ENCODE measurements at regions of chr11 and their contacts with region 1.

Region 1: GRCh38 chr11:33857933-33858371 is 33.9 kb downstream of the LMO2 start:
- DNase-seq: peak; percentile 80
- H3K4me3 Mint-ChIP-seq: no peak overlapping the region
- H3K27ac Mint-ChIP-seq: no peak overlapping the region
- H3K4me1 Mint-ChIP-seq: no peaks in the 10 kb centered on the region
- H3K27me3 Mint-ChIP-seq: peaks cover 33% of the 10 kb centered on the region
- CTCF ChIP-seq: peak; percentile 91

Region 2: GRCh38 chr11:33835143-33835878 is 22.6 kb before region 1 on chr11:
- CTCF ChIA-PET with region 1: interaction called, 11 read pairs
- POLR2A ChIA-PET with region 1: interaction called, 4 read pairs
- intact Hi-C with region 1: no loop called
- DNase-seq: peak; percentile 59
- H3K4me3 Mint-ChIP-seq: no peak overlapping the region
- H3K27ac Mint-ChIP-seq: no peak overlapping the region
- H3K4me1 Mint-ChIP-seq: peaks cover 12% of the 10 kb centered on the region
- H3K27me3 Mint-ChIP-seq: peaks cover 20% of the 10 kb centered on the region
- CTCF ChIP-seq: peak; percentile 45

Region 3: DNA sequence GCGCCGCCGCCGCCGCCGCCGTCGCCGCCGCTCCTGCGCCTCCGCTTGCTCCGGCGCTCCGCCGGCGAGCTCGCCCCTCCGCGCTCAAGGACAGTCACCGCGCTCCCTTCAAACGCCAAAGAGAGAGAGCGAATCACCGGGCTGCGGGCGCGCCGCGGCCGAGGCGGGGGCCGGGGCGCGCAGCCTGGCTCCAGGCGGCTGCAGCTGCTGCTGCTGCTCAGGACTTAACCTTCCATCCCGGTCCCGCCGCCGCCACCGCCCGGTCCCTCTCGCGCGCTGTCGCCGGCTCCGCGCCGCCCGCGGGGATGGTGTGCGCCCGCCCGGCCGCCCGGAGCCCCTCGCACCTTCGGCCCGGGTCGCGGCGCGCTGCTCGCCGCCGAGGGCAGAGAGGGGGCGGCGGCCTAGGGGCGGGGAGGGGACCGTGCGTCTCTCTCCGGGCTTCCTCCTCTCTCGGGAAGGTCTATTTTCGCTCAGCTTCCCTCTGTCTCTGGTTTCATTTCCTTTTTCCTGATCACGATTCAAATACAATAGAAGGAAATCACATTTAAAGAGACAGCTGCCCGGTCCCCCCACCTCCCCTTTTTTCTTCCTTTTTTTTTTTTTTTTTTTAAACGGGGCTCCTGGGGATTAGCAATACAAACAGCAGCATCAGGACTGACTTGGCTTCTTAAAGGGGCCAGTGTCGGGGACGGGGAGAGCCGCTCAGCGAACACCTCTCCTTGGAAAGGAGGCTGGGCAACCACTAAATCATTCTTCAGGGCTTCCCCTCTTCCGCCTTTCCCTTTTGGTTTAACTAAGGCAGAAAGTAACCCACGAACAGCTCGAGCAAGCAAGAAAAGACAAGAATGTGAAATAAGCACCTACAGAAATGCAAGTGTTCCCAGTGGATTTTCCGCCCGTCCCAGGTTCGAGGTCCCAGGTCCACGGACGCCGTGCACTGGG is 11.8 kb after region 1 on chr11:
- CTCF ChIA-PET with region 1: interaction called, 25 read pairs
- POLR2A ChIA-PET with region 1: interaction called, 3 read pairs
- intact Hi-C with region 1: no loop called
- DNase-seq: peak; percentile 33
- H3K4me3 Mint-ChIP-seq: peak overlapping the region; percentile 86
- H3K27ac Mint-ChIP-seq: no peak overlapping the region
- H3K4me1 Mint-ChIP-seq: no peaks in the 10 kb centered on the region
- H3K27me3 Mint-ChIP-seq: no peaks in the 10 kb centered on the region
- CTCF ChIP-seq: no peak

Region 4: GRCh38 chr11:33899383-33900037 is 41.6 kb after region 1 on chr11:
- CTCF ChIA-PET with region 1: interaction called, 10 read pairs
- POLR2A ChIA-PET with region 1: no interaction called
- intact Hi-C with region 1: no loop called
- DNase-seq: peak; percentile 83
- H3K4me3 Mint-ChIP-seq: no peak overlapping the region
- H3K27ac Mint-ChIP-seq: no peak overlapping the region
- H3K4me1 Mint-ChIP-seq: peaks cover 18% of the 10 kb centered on the region
- H3K27me3 Mint-ChIP-seq: peaks cover 15% of the 10 kb centered on the region
- CTCF ChIP-seq: no peak

Region 5: DNA sequence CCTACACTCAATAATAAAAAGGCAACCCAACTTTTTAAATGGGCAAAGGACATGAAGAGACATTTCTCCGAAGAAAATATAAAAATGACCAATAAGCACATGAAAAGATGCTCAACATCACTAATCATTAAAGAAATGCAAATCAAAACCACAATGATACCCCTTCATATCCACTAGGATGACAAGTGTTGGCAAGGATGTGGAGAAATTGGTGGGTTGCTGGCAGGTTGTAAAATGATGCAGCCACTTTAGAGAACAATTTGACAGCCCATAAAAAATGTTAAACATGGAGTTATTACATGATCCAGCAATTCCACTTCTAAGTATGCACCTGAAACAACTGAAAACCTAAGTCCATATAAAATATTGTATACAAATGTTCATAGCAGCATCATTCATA is 107.1 kb after region 1 on chr11:
- CTCF ChIA-PET with region 1: interaction called, 119 read pairs
- POLR2A ChIA-PET with region 1: no interaction called
- intact Hi-C with region 1: no loop called
- DNase-seq: no peak
- H3K4me3 Mint-ChIP-seq: no peak overlapping the region
- H3K27ac Mint-ChIP-seq: no peak overlapping the region
- H3K4me1 Mint-ChIP-seq: no peaks in the 10 kb centered on the region
- H3K27me3 Mint-ChIP-seq: no peaks in the 10 kb centered on the region
- CTCF ChIP-seq: no peak

Region 6: DNA sequence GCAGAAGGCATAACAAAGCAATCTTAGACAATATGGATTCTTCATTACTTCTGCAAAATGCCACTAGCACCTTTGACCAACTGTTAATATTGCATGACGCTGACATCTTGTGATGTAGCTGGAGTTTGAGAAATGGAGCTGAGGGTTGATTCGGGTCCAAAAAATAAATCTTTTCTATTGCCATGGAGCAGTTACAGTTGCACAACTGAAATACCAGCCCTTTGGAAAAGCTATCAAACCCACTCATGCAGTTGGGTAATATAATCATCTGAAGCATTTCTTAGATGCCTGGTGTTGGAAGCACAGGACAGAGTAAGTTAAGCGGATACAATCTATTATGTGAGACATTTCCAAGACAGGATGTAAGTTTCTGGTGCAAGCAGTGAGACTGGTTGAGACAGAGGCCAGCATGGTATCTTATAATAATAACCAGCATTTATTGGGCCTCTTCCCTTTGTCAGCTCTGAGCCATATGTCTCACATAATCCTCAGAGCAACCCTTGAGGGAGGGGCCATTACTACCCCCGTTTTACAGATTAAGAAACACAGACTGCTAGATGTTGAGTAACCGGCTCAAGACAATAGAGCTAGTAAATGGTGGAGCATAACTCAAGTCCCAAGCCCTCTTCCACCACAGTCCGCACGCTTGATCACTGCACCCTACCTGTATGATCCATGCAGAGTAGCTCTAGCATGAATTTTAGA is 118.7 kb after region 1 on chr11:
- CTCF ChIA-PET with region 1: interaction called, 119 read pairs
- POLR2A ChIA-PET with region 1: interaction called, 4 read pairs
- intact Hi-C with region 1: loop called (anchors 1 kb)
- DNase-seq: no peak
- H3K4me3 Mint-ChIP-seq: no peak overlapping the region
- H3K27ac Mint-ChIP-seq: no peak overlapping the region
- H3K4me1 Mint-ChIP-seq: no peaks in the 10 kb centered on the region
- H3K27me3 Mint-ChIP-seq: peaks cover 29% of the 10 kb centered on the region
- CTCF ChIP-seq: no peak

Region 7: GRCh38 chr11:34086554-34087283 is 228.8 kb after region 1 on chr11:
- CTCF ChIA-PET with region 1: no interaction called
- POLR2A ChIA-PET with region 1: no interaction called
- intact Hi-C with region 1: no loop called
- DNase-seq: no peak
- H3K4me3 Mint-ChIP-seq: no peak overlapping the region
- H3K27ac Mint-ChIP-seq: peak overlapping the region; percentile 41
- H3K4me1 Mint-ChIP-seq: peaks cover 6% of the 10 kb centered on the region
- H3K27me3 Mint-ChIP-seq: no peaks in the 10 kb centered on the region
- CTCF ChIP-seq: no peak

Region 8: GRCh38 chr11:34357701-34358257 is 499.8 kb after region 1 on chr11 and contains the start of gene ABTB2:
- CTCF ChIA-PET with region 1: no interaction called
- POLR2A ChIA-PET with region 1: no interaction called
- intact Hi-C with region 1: loop called (anchors 1 kb)
- DNase-seq: peak; percentile 95
- H3K4me3 Mint-ChIP-seq: peak within 1 kb of the TSS; percentile 74
- H3K27ac Mint-ChIP-seq: no peak within 1 kb of the TSS
- H3K4me1 Mint-ChIP-seq: peaks cover 8% of the 10 kb centered on the region
- H3K27me3 Mint-ChIP-seq: no peaks in the 10 kb centered on the region
- CTCF ChIP-seq: no peak
- total RNA-seq, gene ABTB2: 2.9 and 3.1 TPM in 2 replicates

Measured in MCF 10A (cell line).